ENCODE measurements at regions of chr5 and their contacts with region 1.

Region 1: GRCh38 chr5:134225618-134226440 is at the start of gene PPP2CA:
- DNase-seq: peak; percentile 98 to 100 (median 99)
- ATAC-seq: peak; percentile 76
- H3K4me3 ChIP-seq: peak within 1 kb of the TSS; percentile 75
- H3K4me3 Mint-ChIP-seq: peak within 1 kb of the TSS; percentile 99
- H3K27ac ChIP-seq: peak within 1 kb of the TSS; percentile 100
- H3K27ac Mint-ChIP-seq: peak within 1 kb of the TSS; percentile 100
- H3K4me1 ChIP-seq: peaks cover 23% of the 10 kb centered on the region
- H3K4me1 Mint-ChIP-seq: peaks cover 65% of the 10 kb centered on the region
- H3K27me3 ChIP-seq: no peaks in the 10 kb centered on the region
- H3K27me3 Mint-ChIP-seq: no peaks in the 10 kb centered on the region
- CTCF ChIP-seq: no peak
- total RNA-seq, gene PPP2CA: 188 to 195 TPM

Region 2: DNA sequence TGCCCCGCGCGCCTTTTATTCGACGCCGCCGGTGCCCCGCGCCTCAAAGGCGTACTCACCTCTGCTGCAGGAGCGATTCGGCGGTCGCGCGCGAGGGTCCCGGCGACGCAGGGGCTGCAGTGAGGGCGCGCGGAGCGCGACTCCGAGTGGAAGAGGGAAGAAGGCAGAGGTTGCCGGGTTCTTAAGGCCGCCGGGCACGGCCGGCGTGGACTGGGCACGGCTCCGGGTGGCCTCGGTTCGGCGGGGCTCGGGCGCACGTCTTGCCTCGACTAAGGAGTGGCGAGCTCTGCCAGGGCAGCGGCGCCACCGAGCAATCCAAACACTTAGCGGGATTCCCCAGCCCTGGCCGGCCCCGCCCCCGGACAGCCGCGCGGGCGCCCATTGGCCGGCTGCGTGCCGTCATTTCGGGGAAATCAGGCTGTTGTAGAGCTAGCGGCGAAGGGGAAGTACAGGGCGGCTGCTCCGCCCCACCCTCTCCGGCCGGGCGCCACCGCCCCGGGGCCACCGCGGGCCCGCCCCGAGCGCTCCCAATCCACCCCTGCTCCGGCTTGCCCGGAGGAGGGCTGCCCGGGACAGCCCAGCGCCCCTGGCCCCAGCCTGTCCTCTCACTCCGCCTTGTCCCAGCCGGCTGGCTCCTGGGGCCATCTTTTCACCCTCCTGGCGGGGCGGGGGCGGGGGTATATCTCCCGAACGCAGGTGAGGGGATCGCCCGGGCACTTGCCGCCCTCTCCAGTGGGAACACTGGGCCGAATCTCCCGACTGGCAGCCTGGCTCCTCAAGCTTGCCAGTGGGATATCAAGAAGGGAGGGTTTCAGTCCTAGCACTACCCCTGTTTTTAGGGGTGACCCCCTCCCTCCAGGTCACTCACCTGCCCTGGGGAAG is 1735.1 kb before region 1 on chr5 and contains the start of gene IRF1:
- CTCF ChIA-PET with region 1: no interaction called
- POLR2A ChIA-PET with region 1: no interaction called
- intact Hi-C with region 1: loop called in 1 of 2 experiments (anchors 10 kb)
- DNase-seq: peak; percentile 94 to 99 (median 98)
- ATAC-seq: peak; percentile 71
- H3K4me3 ChIP-seq: peak within 1 kb of the TSS; percentile 98
- H3K4me3 Mint-ChIP-seq: peak within 1 kb of the TSS; percentile 98
- H3K27ac ChIP-seq: peak within 1 kb of the TSS; percentile 98 to 99
- H3K27ac Mint-ChIP-seq: peak within 1 kb of the TSS; percentile 97
- H3K4me1 ChIP-seq: peaks cover 75% of the 10 kb centered on the region
- H3K4me1 Mint-ChIP-seq: peaks cover 83% of the 10 kb centered on the region
- H3K27me3 ChIP-seq: no peaks in the 10 kb centered on the region
- H3K27me3 Mint-ChIP-seq: peaks cover 7% of the 10 kb centered on the region
- CTCF ChIP-seq: no peak
- total RNA-seq, gene IRF1: 1,212 to 1,234 TPM

Region 3: GRCh38 chr5:134018154-134018985 is 207.5 kb before region 1 on chr5:
- CTCF ChIA-PET with region 1: no interaction called
- POLR2A ChIA-PET with region 1: no interaction called
- intact Hi-C with region 1: no loop called
- DNase-seq: no peak
- ATAC-seq: no peak
- H3K4me3 ChIP-seq: no peak overlapping the region
- H3K4me3 Mint-ChIP-seq: no peak overlapping the region
- H3K27ac ChIP-seq: no peak overlapping the region
- H3K27ac Mint-ChIP-seq: no peak overlapping the region
- H3K4me1 ChIP-seq: no peaks in the 10 kb centered on the region
- H3K4me1 Mint-ChIP-seq: no peaks in the 10 kb centered on the region
- H3K27me3 ChIP-seq: no peaks in the 10 kb centered on the region
- H3K27me3 Mint-ChIP-seq: no peaks in the 10 kb centered on the region
- CTCF ChIP-seq: no peak

Region 4: DNA sequence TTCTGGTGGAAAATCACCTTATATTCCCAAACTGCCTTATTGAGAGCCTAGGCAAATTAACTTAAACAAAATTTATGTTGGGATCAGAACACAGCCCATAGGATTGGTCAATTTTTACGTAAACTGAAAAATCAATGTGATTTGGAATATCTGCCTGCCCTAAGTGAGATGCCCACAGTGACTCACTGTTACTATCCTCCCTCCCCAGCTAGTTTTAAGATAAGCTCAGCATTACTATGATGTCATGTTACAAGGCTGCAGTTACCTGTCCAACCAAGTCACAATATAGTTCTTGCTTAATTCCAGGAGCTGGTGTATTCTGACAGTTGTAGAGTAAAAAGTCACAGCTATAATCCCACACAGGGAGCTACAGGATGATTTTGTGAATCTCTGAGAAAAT is 72.2 kb before region 1 on chr5:
- CTCF ChIA-PET with region 1: no interaction called
- POLR2A ChIA-PET with region 1: interaction called, 20 read pairs
- intact Hi-C with region 1: no loop called
- DNase-seq: no peak
- ATAC-seq: no peak
- H3K4me3 ChIP-seq: no peak overlapping the region
- H3K4me3 Mint-ChIP-seq: no peak overlapping the region
- H3K27ac ChIP-seq: no peak overlapping the region
- H3K27ac Mint-ChIP-seq: peak overlapping the region; percentile 89
- H3K4me1 ChIP-seq: peaks cover 37% of the 10 kb centered on the region
- H3K4me1 Mint-ChIP-seq: peaks cover 92% of the 10 kb centered on the region
- H3K27me3 ChIP-seq: no peaks in the 10 kb centered on the region
- H3K27me3 Mint-ChIP-seq: no peaks in the 10 kb centered on the region
- CTCF ChIP-seq: no peak

Region 5: GRCh38 chr5:134289509-134290113 is 63.8 kb after region 1 on chr5:
- CTCF ChIA-PET with region 1: interaction called, 4 read pairs
- POLR2A ChIA-PET with region 1: interaction called, 4 read pairs
- intact Hi-C with region 1: loop called (anchors 2 to 5 kb)
- DNase-seq: peak in 13 of 14 experiments; percentile 11 to 83 (median 23)
- ATAC-seq: peak; percentile 58
- H3K4me3 ChIP-seq: no peak overlapping the region
- H3K4me3 Mint-ChIP-seq: no peak overlapping the region
- H3K27ac ChIP-seq: no peak overlapping the region
- H3K27ac Mint-ChIP-seq: no peak overlapping the region
- H3K4me1 ChIP-seq: no peaks in the 10 kb centered on the region
- H3K4me1 Mint-ChIP-seq: no peaks in the 10 kb centered on the region
- H3K27me3 ChIP-seq: no peaks in the 10 kb centered on the region
- H3K27me3 Mint-ChIP-seq: peaks cover 10% of the 10 kb centered on the region
- CTCF ChIP-seq: peak; percentile 83

Region 6: DNA sequence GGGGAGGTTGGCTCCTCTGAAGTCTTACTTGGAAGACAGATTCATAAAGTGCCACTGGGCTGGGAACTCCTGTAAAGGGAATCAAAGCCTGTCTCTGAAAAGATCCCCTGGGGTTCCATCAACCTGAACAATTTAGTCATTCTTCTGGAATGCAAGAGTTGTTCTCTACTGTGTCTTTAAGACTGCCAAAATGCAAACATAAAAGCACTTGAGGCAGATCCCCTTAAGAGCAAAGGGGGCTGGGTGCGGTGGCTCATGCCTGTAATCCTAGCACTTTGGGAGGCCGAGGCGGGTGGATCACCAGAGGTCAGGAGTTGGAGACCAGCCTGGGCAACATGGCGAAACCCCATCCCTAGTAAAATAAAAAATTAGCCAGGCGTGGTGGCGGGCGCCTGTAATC is 169.1 kb after region 1 on chr5:
- CTCF ChIA-PET with region 1: no interaction called
- POLR2A ChIA-PET with region 1: no interaction called
- intact Hi-C with region 1: no loop called
- DNase-seq: no peak
- ATAC-seq: no peak
- H3K4me3 ChIP-seq: no peak overlapping the region
- H3K4me3 Mint-ChIP-seq: no peak overlapping the region
- H3K27ac ChIP-seq: no peak overlapping the region
- H3K27ac Mint-ChIP-seq: no peak overlapping the region
- H3K4me1 ChIP-seq: no peaks in the 10 kb centered on the region
- H3K4me1 Mint-ChIP-seq: peaks cover 5% of the 10 kb centered on the region
- H3K27me3 ChIP-seq: no peaks in the 10 kb centered on the region
- H3K27me3 Mint-ChIP-seq: no peaks in the 10 kb centered on the region
- CTCF ChIP-seq: no peak

Region 7: GRCh38 chr5:134527146-134527960 is 301.5 kb after region 1 on chr5:
- CTCF ChIA-PET with region 1: no interaction called
- POLR2A ChIA-PET with region 1: interaction called, 15 read pairs
- intact Hi-C with region 1: no loop called
- DNase-seq: peak; percentile 43 to 86 (median 60)
- ATAC-seq: peak; percentile 31
- H3K4me3 ChIP-seq: peak overlapping the region; percentile 81
- H3K4me3 Mint-ChIP-seq: peak overlapping the region; percentile 99
- H3K27ac ChIP-seq: peak overlapping the region; percentile 62 to 99
- H3K27ac Mint-ChIP-seq: peak overlapping the region; percentile 100
- H3K4me1 ChIP-seq: peaks cover 64% of the 10 kb centered on the region
- H3K4me1 Mint-ChIP-seq: peaks cover 59% of the 10 kb centered on the region
- H3K27me3 ChIP-seq: no peaks in the 10 kb centered on the region
- H3K27me3 Mint-ChIP-seq: no peaks in the 10 kb centered on the region
- CTCF ChIP-seq: peak; percentile 76

Region 8: GRCh38 chr5:134758504-134759341 is 532.9 kb after region 1 on chr5 and contains the start of gene DDX46:
- CTCF ChIA-PET with region 1: no interaction called
- POLR2A ChIA-PET with region 1: interaction called, 4 read pairs
- intact Hi-C with region 1: loop called in 1 of 2 experiments (anchors 5 kb)
- DNase-seq: peak; percentile 89 to 97 (median 93)
- ATAC-seq: peak; percentile 99
- H3K4me3 ChIP-seq: peak within 1 kb of the TSS; percentile 91
- H3K4me3 Mint-ChIP-seq: peak within 1 kb of the TSS; percentile 100
- H3K27ac ChIP-seq: peak within 1 kb of the TSS; percentile 74 to 76
- H3K27ac Mint-ChIP-seq: peak within 1 kb of the TSS; percentile 95
- H3K4me1 ChIP-seq: peaks cover 22% of the 10 kb centered on the region
- H3K4me1 Mint-ChIP-seq: peaks cover 44% of the 10 kb centered on the region
- H3K27me3 ChIP-seq: no peaks in the 10 kb centered on the region
- H3K27me3 Mint-ChIP-seq: no peaks in the 10 kb centered on the region
- CTCF ChIP-seq: peak; percentile 89
- total RNA-seq, gene DDX46: 35.5 to 35.8 TPM

Measured in CD4-positive, alpha-beta T cell (primary cell).